Activated T-helper 2 cell treated with anti-CD3 and anti-CD28 coated beads, Interferon-gamma antibody, Interleukin-2, Interleukin-4, amounts not matched to agents 10 μg/mL and 5 μg/mL and 100 μg/mL, durations not matched to agents 14 hours and 24 hours and 36 hours (primary cell): ENCODE measurements at regions of chr2 and their contacts with region 1.

Region 1: GRCh38 chr2:168432565-168433186 is 23.4 kb upstream of the CERS6 start:
- DNase-seq: peak; percentile 46
- H3K4me3 Mint-ChIP-seq: peak overlapping the region; percentile 14
- H3K27ac Mint-ChIP-seq: peak overlapping the region; percentile 84
- H3K4me1 Mint-ChIP-seq: peaks cover 35% of the 10 kb centered on the region
- H3K27me3 Mint-ChIP-seq: no peaks in the 10 kb centered on the region

Region 2: GRCh38 chr2:168687314-168687713 is 254.6 kb after region 1 on chr2:
- intact Hi-C with region 1: loop called (anchors 1 kb)
- DNase-seq: no peak
- H3K4me3 Mint-ChIP-seq: no peak overlapping the region
- H3K27ac Mint-ChIP-seq: no peak overlapping the region
- H3K4me1 Mint-ChIP-seq: peaks cover 18% of the 10 kb centered on the region
- H3K27me3 Mint-ChIP-seq: no peaks in the 10 kb centered on the region